ENCODE measurements at regions of chr2 and their contacts with region 1.

Region 1: GRCh38 chr2:99154643-99155536 is at the starts of genes LIPT1 and TSGA10:
- DNase-seq: peak; percentile 95
- H3K4me3 ChIP-seq: peak within 1 kb of the TSS; percentile 75
- H3K27ac ChIP-seq: peak within 1 kb of the TSS; percentile 70
- H3K4me1 ChIP-seq: peaks cover 21% of the 10 kb centered on the region
- CTCF ChIP-seq: peak; percentile 53; the same call in 1 of the 2 replicates
- total RNA-seq, gene LIPT1: 7.9 and 12.5 TPM in 2 replicates
- total RNA-seq, gene TSGA10: 3.8 and 13.3 TPM in 2 replicates

Region 2: GRCh38 chr2:99141110-99142108 is 13.5 kb before region 1 on chr2 and contains the start of gene C2orf15:
- CTCF ChIA-PET with region 1: no interaction called
- POLR2A ChIA-PET with region 1: interaction called, 12 read pairs
- intact Hi-C with region 1: loop called (anchors 2 kb)
- DNase-seq: peak; percentile 91
- H3K4me3 ChIP-seq: peak within 1 kb of the TSS; percentile 71
- H3K27ac ChIP-seq: peak within 1 kb of the TSS; percentile 48
- H3K4me1 ChIP-seq: peaks cover 12% of the 10 kb centered on the region
- CTCF ChIP-seq: no peak
- total RNA-seq, gene C2orf15: 0.25 and 0.31 TPM in 2 replicates

Region 3: GRCh38 chr2:99169534-99169933 is 14.6 kb after region 1 on chr2:
- CTCF ChIA-PET with region 1: no interaction called
- POLR2A ChIA-PET with region 1: interaction called, 6 read pairs
- intact Hi-C with region 1: loop called (anchors 2 kb)
- DNase-seq: no peak
- H3K4me3 ChIP-seq: no peak overlapping the region
- H3K27ac ChIP-seq: no peak overlapping the region
- H3K4me1 ChIP-seq: no peaks in the 10 kb centered on the region
- CTCF ChIP-seq: no peak

Region 4: DNA sequence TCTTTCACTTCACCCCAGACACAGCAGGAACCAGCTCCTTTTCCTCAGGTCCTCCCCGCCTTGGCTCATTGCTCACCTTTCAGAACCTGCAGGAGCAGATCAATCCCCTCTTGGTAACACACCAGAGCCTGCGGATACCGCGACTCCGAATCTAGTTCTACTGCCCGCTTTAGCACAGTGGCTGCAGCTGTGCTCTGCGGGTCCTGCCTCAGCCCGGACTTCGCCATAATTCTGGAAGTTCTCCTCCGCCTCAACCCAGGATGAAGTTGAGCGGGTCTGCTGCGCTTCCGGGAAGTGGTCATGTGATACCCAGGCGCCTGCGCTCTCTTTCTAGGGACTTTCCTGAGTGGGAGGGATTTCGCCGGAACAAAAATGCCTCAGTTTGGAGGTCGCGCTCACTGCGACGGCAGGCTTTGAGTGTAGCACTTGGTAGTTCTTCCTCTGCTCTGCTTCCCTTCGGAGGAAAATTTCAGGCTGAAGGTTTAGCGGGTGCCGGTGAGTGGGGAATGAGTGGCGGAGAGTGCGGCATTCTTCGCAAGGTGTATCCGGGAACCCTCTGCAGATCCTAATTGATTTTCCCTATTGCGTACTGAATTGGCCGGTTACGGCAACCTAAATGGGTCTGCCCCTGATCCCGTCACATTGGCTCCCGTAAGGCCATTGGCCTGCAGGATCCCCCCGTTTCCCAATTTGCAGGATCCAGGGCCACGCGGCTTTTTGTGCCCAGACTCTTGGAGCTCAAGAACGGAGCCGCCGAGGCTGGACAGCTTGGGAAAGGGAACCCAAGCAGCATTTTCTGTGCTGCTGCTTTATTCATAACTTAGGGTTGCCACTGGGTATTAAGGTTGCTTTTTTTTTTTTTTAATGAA is 26.1 kb after region 1 on chr2 and contains the starts of genes MITD1 and MRPL30:
- CTCF ChIA-PET with region 1: no interaction called
- POLR2A ChIA-PET with region 1: interaction called, 8 read pairs
- intact Hi-C with region 1: loop called (anchors 2 kb)
- DNase-seq: peak; percentile 94
- H3K4me3 ChIP-seq: peak within 1 kb of the TSS; percentile 82
- H3K27ac ChIP-seq: peak within 1 kb of the TSS; percentile 32
- H3K4me1 ChIP-seq: peaks cover 17% of the 10 kb centered on the region
- CTCF ChIP-seq: no peak
- total RNA-seq, gene MITD1: 35.9 and 40.2 TPM in 2 replicates
- total RNA-seq, gene MRPL30: 27.7 and 30.9 TPM in 2 replicates

Region 5: DNA sequence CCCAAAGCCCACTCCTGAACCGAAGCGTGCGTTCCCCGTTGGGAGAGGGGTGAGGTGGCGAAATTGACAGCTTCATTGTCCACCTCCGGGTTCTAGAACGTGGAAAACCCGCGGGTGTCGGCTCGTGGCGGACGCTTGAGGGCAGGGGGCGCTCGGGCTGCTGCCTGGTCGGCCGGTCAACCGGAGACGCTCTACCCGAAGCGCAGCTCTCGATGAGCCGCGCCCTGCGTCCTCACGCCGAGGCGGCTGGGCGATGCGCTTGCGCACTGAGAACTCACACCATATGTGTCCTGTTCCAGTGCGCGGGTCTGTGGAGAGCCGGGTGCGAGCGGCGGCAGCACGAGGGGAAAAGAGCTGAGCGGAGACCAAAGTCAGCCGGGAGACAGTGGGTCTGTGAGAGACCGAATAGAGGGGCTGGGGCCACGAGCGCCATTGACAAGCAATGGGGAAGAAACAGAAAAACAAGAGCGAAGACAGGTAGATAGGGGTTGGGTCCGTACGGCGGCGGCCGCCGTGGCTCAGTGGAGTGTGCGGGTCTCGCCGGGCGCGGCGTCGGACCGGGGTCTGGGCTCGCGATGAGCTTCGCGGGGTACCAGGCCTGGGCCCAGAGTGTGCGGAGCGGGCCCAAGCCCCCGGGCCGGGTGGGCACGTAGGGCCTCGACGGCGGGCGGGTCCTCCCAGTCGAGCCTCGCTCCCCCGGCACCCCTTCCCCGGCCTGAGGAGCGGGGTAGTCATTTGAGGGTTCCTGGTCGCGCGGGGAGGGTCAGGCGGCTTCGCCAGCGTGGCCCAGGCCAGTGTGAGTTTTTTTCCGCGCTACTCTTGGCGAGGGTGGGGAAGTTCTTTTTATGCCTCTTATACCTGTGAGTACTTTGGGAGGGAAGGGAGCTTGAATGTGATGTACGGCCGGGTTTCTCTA is 182.5 kb after region 1 on chr2 and contains the start of gene EIF5B:
- CTCF ChIA-PET with region 1: no interaction called
- POLR2A ChIA-PET with region 1: no interaction called
- intact Hi-C with region 1: loop called (anchors 2 kb)
- DNase-seq: peak; percentile 98
- H3K4me3 ChIP-seq: peak within 1 kb of the TSS; percentile 86
- H3K27ac ChIP-seq: peak within 1 kb of the TSS; percentile 83
- H3K4me1 ChIP-seq: peaks cover 33% of the 10 kb centered on the region
- CTCF ChIP-seq: peak; percentile 87
- total RNA-seq, gene EIF5B: 19.9 and 28.7 TPM in 2 replicates

Region 6: DNA sequence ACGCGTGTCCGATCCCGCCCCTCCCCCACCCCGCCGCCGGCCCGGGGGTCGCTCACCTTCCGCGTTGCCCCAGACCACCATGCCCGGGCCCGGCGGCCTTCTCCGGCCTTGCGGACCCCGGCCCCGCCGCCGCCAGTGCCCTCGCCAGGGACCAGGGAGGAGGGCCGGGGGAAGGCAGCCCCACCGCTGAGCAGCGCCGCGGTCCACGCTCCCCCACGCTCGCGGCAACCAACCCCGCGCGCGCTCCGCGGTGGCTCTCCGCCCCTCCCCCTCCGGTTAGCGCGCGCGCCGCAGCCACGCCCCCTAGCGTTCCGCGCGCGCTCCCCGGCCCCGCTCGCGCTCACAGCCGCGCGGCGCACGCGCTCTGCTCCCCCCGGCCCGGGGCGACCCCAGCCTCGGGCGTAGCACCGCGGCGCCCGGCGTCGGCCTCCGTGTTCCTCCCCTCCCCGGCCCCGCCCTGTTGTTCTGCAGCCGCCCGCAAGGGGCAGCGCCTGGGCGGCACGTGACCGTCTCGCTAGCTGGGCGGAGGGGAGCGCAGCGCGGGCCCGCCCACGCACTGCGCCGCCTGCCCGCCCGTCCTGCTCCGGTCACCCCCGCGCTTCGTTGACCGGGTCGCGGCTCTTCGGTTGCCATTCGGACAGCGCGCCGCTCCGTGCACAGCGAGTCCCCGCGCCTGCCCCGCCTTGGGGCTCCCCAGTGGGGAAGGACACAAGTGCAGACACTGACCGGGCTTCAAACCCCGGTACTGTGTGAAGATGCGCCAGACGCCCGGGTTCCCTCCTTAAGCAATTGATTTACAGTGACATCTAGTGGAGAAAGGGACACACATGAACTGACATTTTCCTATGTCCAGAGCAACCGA is 335.1 kb after region 1 on chr2 and contains the start of gene REV1:
- CTCF ChIA-PET with region 1: no interaction called
- POLR2A ChIA-PET with region 1: no interaction called
- intact Hi-C with region 1: loop called (anchors 1 kb)
- DNase-seq: peak; percentile 96
- H3K4me3 ChIP-seq: peak within 1 kb of the TSS; percentile 78
- H3K27ac ChIP-seq: peak within 1 kb of the TSS; percentile 49
- H3K4me1 ChIP-seq: peaks cover 28% of the 10 kb centered on the region
- CTCF ChIP-seq: peak; percentile 85
- total RNA-seq, gene REV1: 59.4 and 68.1 TPM in 2 replicates

Region 7: GRCh38 chr2:100038019-100038418 is 883.1 kb after region 1 on chr2:
- CTCF ChIA-PET with region 1: no interaction called
- POLR2A ChIA-PET with region 1: no interaction called
- intact Hi-C with region 1: no loop called
- DNase-seq: no peak
- H3K4me3 ChIP-seq: no peak overlapping the region
- H3K27ac ChIP-seq: no peak overlapping the region
- H3K4me1 ChIP-seq: no peaks in the 10 kb centered on the region
- CTCF ChIP-seq: no peak

Measured in OCI-LY7 (cell line).